Prostate gland (tissue), 2 donors: ENCODE measurements at regions of chr20 and their contacts with region 1.

Region 1: DNA sequence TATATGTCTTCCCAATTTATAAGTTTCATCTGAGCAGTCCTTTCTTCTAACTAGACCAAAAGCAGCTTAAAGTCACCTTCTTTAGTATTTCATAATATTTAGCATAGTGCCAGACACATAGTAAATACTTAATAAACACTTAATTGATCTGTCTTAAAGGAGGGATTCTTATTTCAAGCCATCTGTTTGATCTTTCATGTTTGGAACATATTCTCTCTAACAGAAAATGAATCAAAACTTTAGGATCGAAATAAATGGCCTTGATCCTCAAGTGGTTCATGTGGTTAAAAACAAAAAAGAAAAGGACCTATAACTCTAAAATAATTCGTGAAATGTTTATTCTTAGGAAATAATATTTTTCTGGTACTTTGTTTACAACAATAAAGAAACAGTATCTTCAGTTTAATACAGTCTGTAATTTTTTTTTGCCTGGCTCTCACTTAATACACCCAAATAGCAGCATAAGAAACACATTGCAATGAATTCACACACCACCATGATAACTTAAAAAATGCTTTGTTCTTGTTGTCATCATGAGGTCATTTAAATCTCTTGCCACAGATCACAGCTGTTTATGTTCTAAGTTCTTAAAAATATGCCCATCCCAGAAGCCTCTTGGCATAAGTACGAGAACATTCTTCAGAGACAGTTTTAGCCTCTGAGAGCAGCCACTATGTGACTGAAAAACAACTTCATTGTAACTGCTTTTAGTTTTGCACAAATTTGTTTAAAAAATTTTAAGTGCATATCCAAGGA is 48.1 kb downstream of the ESF1 start:
- DNase-seq: no peak
- H3K4me3 ChIP-seq: no peak overlapping the region
- H3K27ac ChIP-seq: no peak overlapping the region
- H3K4me1 ChIP-seq: no peaks in the 10 kb centered on the region
- H3K27me3 ChIP-seq: no peaks in the 10 kb centered on the region
- CTCF ChIP-seq: no peak
- POLR2A ChIP-seq: no peak

Region 2: GRCh38 chr20:13436530-13436929 is 300.1 kb before region 1 on chr20:
- intact Hi-C with region 1: no loop called
- DNase-seq: no peak
- H3K4me3 ChIP-seq: no peak overlapping the region
- H3K27ac ChIP-seq: no peak overlapping the region
- H3K4me1 ChIP-seq: no peaks in the 10 kb centered on the region
- H3K27me3 ChIP-seq: no peaks in the 10 kb centered on the region
- CTCF ChIP-seq: no peak
- POLR2A ChIP-seq: no peak

Region 3: DNA sequence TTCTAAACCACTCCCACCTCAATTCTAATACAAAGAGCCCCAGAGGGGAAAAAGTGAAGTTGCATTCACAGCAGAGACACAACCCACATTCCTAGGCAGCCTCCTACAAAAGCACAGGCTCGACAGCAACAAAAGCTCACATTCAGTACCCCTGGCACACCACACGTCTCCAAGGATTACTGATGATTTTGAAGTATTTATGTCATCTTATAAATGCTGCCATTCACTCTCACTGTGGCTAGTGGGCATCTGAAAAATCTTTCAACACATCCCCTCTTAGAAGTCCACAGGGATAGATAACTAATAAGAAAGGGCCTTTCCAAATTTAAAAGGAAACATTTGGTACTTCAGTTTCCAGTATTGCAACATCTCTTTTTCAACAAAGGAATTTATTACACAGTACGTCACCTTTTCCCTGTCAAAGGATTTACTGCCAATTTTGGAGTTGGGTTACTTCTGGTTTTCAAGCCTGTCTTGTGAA is 244.6 kb before region 1 on chr20:
- intact Hi-C with region 1: loop called (anchors 10 kb)
- DNase-seq: peak; percentile 25
- H3K4me3 ChIP-seq: no peak overlapping the region
- H3K27ac ChIP-seq: peak overlapping the region; percentile 38 to 53
- H3K4me1 ChIP-seq: no peaks in the 10 kb centered on the region
- H3K27me3 ChIP-seq: no peaks in the 10 kb centered on the region
- CTCF ChIP-seq: peak in 2 of 4 experiments; percentile 30 to 36
- POLR2A ChIP-seq: no peak

Region 4: GRCh38 chr20:13638496-13639222 is 98.0 kb before region 1 on chr20 and contains the start of gene TASP1:
- intact Hi-C with region 1: loop called (anchors 10 kb)
- DNase-seq: peak; percentile 98
- H3K4me3 ChIP-seq: peak within 1 kb of the TSS; percentile 69 to 84
- H3K27ac ChIP-seq: peak within 1 kb of the TSS; percentile 71 to 75
- H3K4me1 ChIP-seq: no peaks in the 10 kb centered on the region
- H3K27me3 ChIP-seq: no peaks in the 10 kb centered on the region
- CTCF ChIP-seq: peak in 1 of 4 experiments; percentile 6
- POLR2A ChIP-seq: peak; percentile 69
- total RNA-seq, gene TASP1: 9.3 to 14.2 TPM

Region 5: DNA sequence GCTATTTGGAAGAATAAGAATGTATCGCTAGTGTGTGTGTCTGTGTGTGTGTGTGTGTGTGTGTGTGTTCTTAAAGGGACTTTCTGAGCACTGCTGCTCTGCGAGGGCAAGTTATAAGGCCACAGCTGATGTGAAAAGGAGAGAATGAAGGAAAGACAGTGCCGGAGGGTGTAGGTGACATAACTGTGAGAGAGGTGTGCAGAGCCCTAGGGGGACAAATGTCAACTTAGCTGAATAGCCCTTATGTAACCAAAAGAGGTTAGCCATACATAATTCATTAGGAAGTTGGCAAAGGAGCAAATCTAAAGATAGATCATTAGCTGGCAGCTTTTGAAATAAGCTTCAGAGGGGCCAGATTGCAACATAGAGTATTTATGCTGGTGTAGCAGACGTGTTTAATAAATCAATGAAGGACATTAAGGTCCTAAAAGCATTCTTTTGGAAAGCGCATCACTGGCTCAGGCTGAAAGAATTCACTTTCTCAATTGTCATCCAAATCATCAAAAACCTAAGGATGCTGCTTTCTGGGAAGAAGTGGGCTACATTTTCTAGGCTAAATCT is 129.3 kb after region 1 on chr20:
- intact Hi-C with region 1: loop called (anchors 5 kb)
- DNase-seq: no peak
- H3K4me3 ChIP-seq: no peak overlapping the region
- H3K27ac ChIP-seq: peak overlapping the region; percentile 35 to 46
- H3K4me1 ChIP-seq: no peaks in the 10 kb centered on the region
- H3K27me3 ChIP-seq: no peaks in the 10 kb centered on the region
- CTCF ChIP-seq: no peak
- POLR2A ChIP-seq: no peak